Posterior vena cava (tissue), 2 donors: ENCODE measurements at regions of chr15 and their contacts with region 1.

Region 1: GRCh38 chr15:87080547-87080946 is 1000.9 kb downstream of the AGBL1 start:
- DNase-seq: no peak

Region 2: GRCh38 chr15:86988033-86988432 is 92.5 kb before region 1 on chr15:
- intact Hi-C with region 1: loop called in 1 of 2 experiments (anchors 5 kb)
- DNase-seq: no peak

Region 3: GRCh38 chr15:87597346-87598052 is 517.0 kb after region 1 on chr15:
- intact Hi-C with region 1: no loop called
- DNase-seq: no peak